Activated naive CD4-positive, alpha-beta T cell treated with anti-CD3 and anti-CD28 coated beads, Interleukin-2, amount 10 ng/mL, durations not matched to agents 7 days and 5 days (primary cell): ENCODE measurements at regions of chr6 and their contacts with region 1.

Region 1: DNA sequence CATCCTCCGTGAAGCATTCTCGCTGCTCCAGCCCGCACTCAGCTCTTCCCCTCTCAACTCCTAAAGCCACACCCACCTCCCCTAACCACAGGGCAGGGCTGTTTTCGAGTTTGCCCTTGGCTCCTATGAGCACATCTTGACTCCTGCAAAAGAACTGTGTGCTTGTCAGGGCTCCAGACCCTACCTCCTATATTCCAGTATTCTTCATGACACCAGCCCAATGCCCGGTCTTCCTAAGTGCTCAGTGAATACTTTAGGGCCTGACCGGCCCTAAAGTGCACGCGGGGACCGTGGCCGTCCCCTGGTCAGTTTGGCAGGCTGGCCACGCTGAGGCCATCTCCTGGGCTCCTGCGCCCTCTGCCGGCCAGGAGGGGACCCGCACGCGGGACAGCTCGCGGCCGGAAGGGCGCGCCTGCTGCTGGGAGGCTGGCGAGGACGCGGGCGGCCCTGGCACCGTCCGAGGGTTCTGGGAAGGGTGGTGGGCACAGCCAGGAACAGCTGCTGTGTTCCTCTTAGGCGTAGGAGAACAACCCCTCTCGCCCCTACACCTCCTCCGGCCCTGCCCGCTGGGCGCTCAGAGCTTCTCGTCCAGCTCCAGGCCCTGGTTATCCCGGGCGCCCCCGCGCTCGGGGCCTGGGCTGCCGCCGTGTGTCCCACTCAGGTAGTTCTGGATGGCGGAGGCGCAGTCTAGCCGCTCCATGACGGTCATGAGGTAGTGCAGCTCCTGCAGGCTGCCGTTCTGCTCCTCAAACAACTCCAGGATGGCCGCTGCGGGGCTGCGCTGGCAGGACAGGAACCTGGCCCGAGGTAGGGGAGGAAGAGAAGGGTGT is 11.0 kb downstream of the UNC5CL start:
- DNase-seq: peak; percentile 84
- H3K4me3 Mint-ChIP-seq: peak overlapping the region; percentile 72
- H3K27ac Mint-ChIP-seq: peak overlapping the region; percentile 84
- H3K4me1 Mint-ChIP-seq: peaks cover 24% of the 10 kb centered on the region
- H3K27me3 Mint-ChIP-seq: no peaks in the 10 kb centered on the region

Region 2: DNA sequence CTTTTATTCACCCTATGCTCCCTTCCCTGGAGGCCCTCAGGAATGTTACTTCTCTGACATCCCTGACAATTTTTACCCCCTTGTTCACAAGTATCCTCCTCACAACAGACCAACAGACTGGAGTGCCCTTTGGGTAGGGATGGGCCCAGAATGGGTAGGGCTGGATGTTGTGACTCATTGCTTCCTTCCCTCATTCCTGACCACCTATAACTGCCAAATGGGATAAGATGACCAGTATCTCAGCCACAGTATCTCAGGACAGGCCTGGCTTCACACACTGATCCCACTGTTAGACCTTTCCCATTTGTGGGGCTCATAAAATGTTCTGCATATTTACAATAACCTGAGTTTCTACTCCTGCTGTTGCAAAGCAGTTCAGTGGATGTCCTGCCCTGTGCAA is 217.8 kb before region 1 on chr6:
- CTCF ChIA-PET with region 1: no interaction called
- DNase-seq: no peak
- H3K4me3 Mint-ChIP-seq: no peak overlapping the region
- H3K27ac Mint-ChIP-seq: no peak overlapping the region
- H3K4me1 Mint-ChIP-seq: no peaks in the 10 kb centered on the region
- H3K27me3 Mint-ChIP-seq: peaks cover 5% of the 10 kb centered on the region

Region 3: GRCh38 chr6:40936818-40937251 is 91.2 kb before region 1 on chr6:
- CTCF ChIA-PET with region 1: no interaction called
- DNase-seq: no peak
- H3K4me3 Mint-ChIP-seq: no peak overlapping the region
- H3K27ac Mint-ChIP-seq: no peak overlapping the region
- H3K4me1 Mint-ChIP-seq: no peaks in the 10 kb centered on the region
- H3K27me3 Mint-ChIP-seq: peaks cover 28% of the 10 kb centered on the region

Region 4: GRCh38 chr6:40999569-40999968 is 28.4 kb before region 1 on chr6:
- CTCF ChIA-PET with region 1: interaction called, 16 read pairs
- DNase-seq: peak; percentile 39
- H3K4me3 Mint-ChIP-seq: no peak overlapping the region
- H3K27ac Mint-ChIP-seq: no peak overlapping the region
- H3K4me1 Mint-ChIP-seq: no peaks in the 10 kb centered on the region
- H3K27me3 Mint-ChIP-seq: peaks cover 70% of the 10 kb centered on the region

Region 5: GRCh38 chr6:41017663-41018062 is 10.4 kb before region 1 on chr6:
- CTCF ChIA-PET with region 1: interaction called, 11 read pairs
- DNase-seq: no peak
- H3K4me3 Mint-ChIP-seq: no peak overlapping the region
- H3K27ac Mint-ChIP-seq: no peak overlapping the region
- H3K4me1 Mint-ChIP-seq: no peaks in the 10 kb centered on the region
- H3K27me3 Mint-ChIP-seq: peaks cover 11% of the 10 kb centered on the region

Region 6: DNA sequence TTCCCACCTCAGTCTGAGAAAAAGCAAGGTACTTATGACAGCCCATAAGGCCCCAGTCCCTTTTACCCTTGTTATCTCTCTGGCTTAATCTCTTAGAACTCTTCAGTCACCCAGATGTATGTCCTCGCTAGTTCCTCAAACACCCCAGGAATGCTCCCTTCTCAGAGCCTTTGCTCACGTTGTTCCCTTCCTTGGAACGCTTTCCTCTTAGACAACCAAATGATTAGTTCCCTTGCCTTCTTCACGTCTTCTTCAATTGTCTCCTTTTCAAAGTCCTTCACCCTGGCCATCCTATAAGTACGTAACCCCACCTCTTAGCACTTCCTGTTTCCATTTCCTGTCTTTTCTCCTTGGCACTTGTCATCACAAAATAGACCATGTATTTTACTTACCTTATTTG is 23.9 kb after region 1 on chr6:
- CTCF ChIA-PET with region 1: interaction called, 15 read pairs
- DNase-seq: no peak
- H3K4me3 Mint-ChIP-seq: no peak overlapping the region
- H3K27ac Mint-ChIP-seq: peak overlapping the region; percentile 79
- H3K4me1 Mint-ChIP-seq: peaks cover 21% of the 10 kb centered on the region
- H3K27me3 Mint-ChIP-seq: no peaks in the 10 kb centered on the region

Region 7: GRCh38 chr6:41182069-41183034 is 154.3 kb after region 1 on chr6:
- CTCF ChIA-PET with region 1: interaction called, 11 read pairs
- DNase-seq: peak; percentile 75
- H3K4me3 Mint-ChIP-seq: no peak overlapping the region
- H3K27ac Mint-ChIP-seq: no peak overlapping the region
- H3K4me1 Mint-ChIP-seq: peaks cover 45% of the 10 kb centered on the region
- H3K27me3 Mint-ChIP-seq: peaks cover 19% of the 10 kb centered on the region